Esophagus muscularis mucosa (tissue), 4 donors: ENCODE measurements at regions of chr15 and their contacts with region 1.

Region 1: DNA sequence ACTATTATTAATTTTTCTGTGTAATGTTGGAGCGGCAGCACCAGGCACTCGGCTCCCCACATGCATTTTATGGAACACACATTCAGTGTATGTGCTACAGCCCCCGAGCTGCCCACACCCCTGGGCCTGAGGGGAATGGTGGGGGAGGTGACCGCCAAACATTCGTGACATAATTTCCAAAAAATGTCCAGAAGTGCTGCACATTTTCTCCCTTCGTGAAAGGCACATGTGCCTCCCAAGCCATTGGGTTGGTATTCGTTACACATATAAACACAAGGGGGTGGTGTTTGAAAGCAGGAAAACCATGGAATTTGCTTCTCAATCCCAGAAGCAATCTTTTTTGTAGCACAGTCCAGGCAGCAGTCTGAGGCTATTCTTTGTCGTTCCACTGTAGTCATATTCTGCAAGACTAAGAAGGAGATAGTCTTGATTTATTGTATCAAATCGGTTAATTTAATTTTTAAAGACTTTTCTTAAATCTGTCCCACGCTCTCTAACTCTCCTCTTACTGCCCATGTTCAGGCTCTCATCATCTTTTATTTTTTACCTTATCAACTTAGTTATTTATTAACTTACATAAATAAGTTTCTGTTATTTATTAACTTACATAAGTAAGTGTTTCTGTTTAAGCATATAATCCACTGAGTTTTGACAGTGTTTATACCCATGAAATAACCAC is 39.2 kb upstream of the POLR2M start:
- DNase-seq: peak; percentile 92
- H3K4me3 ChIP-seq: no peak overlapping the region
- H3K27ac ChIP-seq: peak overlapping the region; percentile 54 to 58 (median 56)
- H3K4me1 ChIP-seq: peaks cover 19 to 40% (median 34%) of the 10 kb centered on the region in 4 donors
- H3K27me3 ChIP-seq: no peaks in the 10 kb centered on the region
- CTCF ChIP-seq: peak; percentile 33 to 48 (median 45)
- EP300 ChIP-seq: no peak
- POLR2A ChIP-seq: no peak

Region 2: DNA sequence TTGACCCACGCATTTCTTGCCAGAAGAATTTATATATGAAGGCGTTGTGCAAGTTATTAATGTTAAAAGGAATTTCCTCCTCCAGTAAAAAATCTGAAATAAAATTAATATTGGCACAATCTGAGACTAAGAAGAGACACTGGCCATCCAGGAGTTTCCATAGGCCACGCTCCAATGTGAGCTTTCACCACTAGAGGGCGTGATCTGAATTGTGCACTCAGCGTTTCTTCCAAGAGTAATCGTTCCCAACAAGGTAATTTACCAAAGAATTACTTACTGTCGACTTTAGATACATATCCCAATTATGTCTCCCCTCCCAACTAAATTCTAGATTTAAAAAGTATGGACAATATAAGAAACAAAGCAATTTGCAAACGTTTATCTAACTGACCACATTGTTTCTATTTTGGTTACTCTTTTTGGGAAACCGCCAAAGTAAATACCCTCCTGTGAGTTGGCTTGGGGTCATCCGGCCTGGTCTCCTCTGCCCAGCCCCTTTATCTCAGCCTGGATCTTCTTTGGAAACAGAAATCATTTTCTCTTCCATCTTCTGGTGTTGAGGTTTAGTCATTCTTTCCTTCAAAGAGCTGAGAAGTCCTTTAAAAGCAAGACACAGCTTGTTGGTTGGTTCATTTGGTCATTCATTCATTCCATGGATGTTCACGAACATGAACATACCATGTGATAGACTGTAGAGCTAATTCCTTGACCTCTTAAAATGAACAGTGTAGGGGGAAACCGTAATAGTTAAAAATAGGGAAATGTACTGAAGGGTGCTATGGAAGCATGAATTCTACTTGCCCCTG is 65.4 kb after region 1 on chr15:
- intact Hi-C with region 1: loop called (anchors 5 kb)
- DNase-seq: peak; percentile 90
- H3K4me3 ChIP-seq: no peak overlapping the region
- H3K27ac ChIP-seq: no peak overlapping the region
- H3K4me1 ChIP-seq: peaks cover 0 to 10% (median 2%) of the 10 kb centered on the region in 4 donors
- H3K27me3 ChIP-seq: no peaks in the 10 kb centered on the region
- CTCF ChIP-seq: peak; percentile 73 to 86 (median 74)
- EP300 ChIP-seq: no peak
- POLR2A ChIP-seq: no peak

Region 3: DNA sequence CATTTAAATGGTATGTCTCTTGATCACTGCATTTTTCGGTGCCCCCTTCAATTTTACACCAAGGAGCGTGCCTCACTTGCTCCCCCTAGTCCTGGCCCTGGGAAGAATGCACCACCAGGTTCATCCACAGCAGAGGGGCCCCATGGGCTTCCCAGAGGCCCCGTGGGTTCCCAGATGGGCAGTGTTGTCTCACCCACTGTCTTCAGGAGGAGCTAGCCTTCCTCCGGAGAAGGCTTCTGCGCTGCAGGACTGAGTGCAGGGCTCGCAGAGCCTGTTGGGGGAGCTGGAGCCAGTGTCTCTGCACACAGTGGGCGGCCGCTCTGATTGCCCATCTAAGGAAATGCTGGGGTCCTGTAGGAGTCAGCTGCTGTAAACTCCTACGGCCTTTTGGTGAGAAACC is 85.1 kb after region 1 on chr15:
- intact Hi-C with region 1: no loop called
- DNase-seq: no peak
- H3K4me3 ChIP-seq: peak overlapping the region; percentile 5 to 19 (median 10)
- H3K27ac ChIP-seq: peak overlapping the region in 1 of 4 donors; percentile 24
- H3K4me1 ChIP-seq: peaks cover 0 to 13% (median 11%) of the 10 kb centered on the region in 4 donors
- H3K27me3 ChIP-seq: no peaks in the 10 kb centered on the region
- CTCF ChIP-seq: peak; percentile 20 to 26 (median 22)
- EP300 ChIP-seq: no peak
- POLR2A ChIP-seq: no peak

Region 4: GRCh38 chr15:57849317-57849716 is 182.0 kb after region 1 on chr15:
- intact Hi-C with region 1: no loop called
- DNase-seq: no peak
- H3K4me3 ChIP-seq: no peak overlapping the region
- H3K27ac ChIP-seq: no peak overlapping the region
- H3K4me1 ChIP-seq: no peaks in the 10 kb centered on the region
- H3K27me3 ChIP-seq: peaks cover 0 to 9% (median 0%) of the 10 kb centered on the region in 4 donors
- CTCF ChIP-seq: no peak
- EP300 ChIP-seq: no peak
- POLR2A ChIP-seq: no peak